Activated T-helper 1 cell treated with anti-CD3 and anti-CD28 coated beads, Interleukin-12 subunit alpha, Interleukin-12 subunit beta, Interleukin-2, Interleukin-4 antibody, amounts not matched to agents 30 ng/mL and 10 ng/mL and 1 ng/mL, durations not matched to agents 14 hours and 24 hours and 36 hours (primary cell): ENCODE measurements at regions of chr22 and their contacts with region 1.

Region 1: DNA sequence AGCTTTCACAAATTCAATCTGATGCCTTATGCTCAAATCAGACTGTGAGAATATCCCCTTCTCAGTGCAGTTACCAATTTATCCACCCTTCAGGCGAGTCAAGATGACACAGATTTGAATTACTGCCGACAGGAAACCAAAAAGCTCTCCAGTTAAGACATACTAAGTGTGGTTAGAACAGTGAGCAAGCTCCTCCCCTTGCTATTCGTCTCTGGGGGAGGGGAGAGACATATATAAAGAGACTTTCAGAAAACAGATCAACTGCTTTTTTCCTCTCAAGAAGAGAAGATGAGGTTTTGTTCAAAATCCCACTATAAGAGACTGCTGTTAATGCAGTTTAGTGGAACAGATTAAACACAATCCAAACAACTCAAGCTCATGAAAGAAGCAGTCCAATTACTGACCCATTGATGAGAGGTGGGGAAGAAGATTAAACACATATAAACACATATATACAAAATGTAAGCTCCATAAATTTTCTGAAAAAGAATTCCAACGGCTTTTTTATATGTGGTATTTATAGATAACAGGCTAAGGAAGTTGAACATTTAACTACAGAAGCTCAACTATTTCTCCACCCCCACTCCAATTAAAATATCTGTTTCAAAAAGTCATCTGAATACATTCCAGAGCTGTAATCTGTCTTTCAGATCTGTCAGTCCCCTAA is 102.7 kb downstream of the MRTFA start:
- DNase-seq: peak; percentile 53
- H3K4me3 Mint-ChIP-seq: peak overlapping the region; percentile 84
- H3K27ac Mint-ChIP-seq: peak overlapping the region; percentile 82
- H3K4me1 Mint-ChIP-seq: peaks cover 62% of the 10 kb centered on the region
- H3K27me3 Mint-ChIP-seq: no peaks in the 10 kb centered on the region

Region 2: DNA sequence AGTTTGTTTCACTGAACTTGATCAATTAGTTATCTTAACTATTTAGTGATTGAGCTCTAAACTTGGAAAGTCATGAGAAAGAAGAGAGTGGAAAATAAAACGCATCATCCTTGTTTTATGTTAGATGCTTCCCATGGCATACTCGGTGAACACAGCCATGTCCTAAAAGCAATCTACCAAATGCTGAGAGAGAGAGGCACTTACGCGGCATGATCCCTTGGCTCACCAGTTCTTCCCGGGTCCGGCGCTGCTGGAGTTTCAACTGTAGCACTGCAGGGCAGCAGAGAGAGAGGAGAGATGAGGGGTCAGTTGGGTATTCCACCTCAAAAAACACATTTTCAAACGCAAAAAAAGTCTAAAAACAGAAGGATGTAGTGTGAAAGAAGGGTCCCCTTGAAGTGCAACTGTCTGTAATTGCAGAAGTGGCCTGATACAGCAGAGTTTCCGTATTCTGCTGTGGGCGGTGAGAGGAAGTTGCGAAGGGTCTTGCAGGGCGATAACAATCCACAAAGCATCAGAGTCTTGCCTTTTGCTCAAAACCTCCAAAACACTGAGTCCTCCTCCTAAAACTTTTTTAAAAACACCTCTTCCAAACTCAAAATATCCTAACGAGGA is 70.7 kb before region 1 on chr22:
- intact Hi-C with region 1: loop called (anchors 2 kb)
- DNase-seq: peak; percentile 37
- H3K4me3 Mint-ChIP-seq: peak overlapping the region; percentile 93
- H3K27ac Mint-ChIP-seq: peak overlapping the region; percentile 99
- H3K4me1 Mint-ChIP-seq: peaks cover 55% of the 10 kb centered on the region
- H3K27me3 Mint-ChIP-seq: no peaks in the 10 kb centered on the region

Region 3: GRCh38 chr22:40519284-40519947 is 14.4 kb before region 1 on chr22:
- intact Hi-C with region 1: loop called (anchors 2 kb)
- DNase-seq: no peak
- H3K4me3 Mint-ChIP-seq: peak overlapping the region; percentile 50
- H3K27ac Mint-ChIP-seq: peak overlapping the region; percentile 83
- H3K4me1 Mint-ChIP-seq: peaks cover 26% of the 10 kb centered on the region
- H3K27me3 Mint-ChIP-seq: no peaks in the 10 kb centered on the region

Region 4: GRCh38 chr22:40583053-40583741 is 49.4 kb after region 1 on chr22:
- intact Hi-C with region 1: loop called (anchors 2 kb)
- DNase-seq: no peak
- H3K4me3 Mint-ChIP-seq: peak overlapping the region; percentile 31
- H3K27ac Mint-ChIP-seq: peak overlapping the region; percentile 78
- H3K4me1 Mint-ChIP-seq: peaks cover 38% of the 10 kb centered on the region
- H3K27me3 Mint-ChIP-seq: no peaks in the 10 kb centered on the region

Region 5: DNA sequence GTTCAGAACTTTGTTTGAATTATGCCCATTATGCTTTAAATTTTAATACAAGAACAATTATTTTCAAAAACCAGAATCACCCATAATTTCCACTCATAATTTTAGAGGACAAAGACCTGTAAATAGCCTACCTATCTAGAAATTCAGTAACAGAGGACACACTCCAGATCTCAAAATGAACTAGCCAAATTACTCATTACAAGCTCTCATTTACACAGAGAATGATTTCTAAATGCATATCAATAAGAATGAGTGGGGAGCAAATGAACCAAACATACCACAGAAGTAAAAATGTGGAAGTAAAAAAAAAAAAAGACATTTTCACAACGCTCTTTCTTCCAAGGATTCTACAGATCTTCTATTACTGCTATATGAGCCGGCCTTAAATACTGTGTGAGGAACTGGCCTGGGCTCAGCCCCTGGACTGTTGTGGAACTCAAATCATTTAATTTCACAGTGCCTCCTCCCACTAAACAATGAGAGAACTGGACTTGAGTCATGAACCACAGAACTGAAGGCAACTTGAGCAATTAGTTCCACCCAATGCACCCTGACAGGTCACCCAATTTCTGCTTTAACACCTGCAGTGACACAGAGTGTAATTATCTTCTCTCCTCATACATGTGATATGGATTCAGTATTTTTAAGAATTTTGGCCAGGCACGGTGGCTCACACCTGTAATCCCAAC is 94.7 kb after region 1 on chr22:
- intact Hi-C with region 1: loop called (anchors 2 kb)
- DNase-seq: no peak
- H3K4me3 Mint-ChIP-seq: no peak overlapping the region
- H3K27ac Mint-ChIP-seq: peak overlapping the region; percentile 62
- H3K4me1 Mint-ChIP-seq: peaks cover 34% of the 10 kb centered on the region
- H3K27me3 Mint-ChIP-seq: no peaks in the 10 kb centered on the region

Region 6: DNA sequence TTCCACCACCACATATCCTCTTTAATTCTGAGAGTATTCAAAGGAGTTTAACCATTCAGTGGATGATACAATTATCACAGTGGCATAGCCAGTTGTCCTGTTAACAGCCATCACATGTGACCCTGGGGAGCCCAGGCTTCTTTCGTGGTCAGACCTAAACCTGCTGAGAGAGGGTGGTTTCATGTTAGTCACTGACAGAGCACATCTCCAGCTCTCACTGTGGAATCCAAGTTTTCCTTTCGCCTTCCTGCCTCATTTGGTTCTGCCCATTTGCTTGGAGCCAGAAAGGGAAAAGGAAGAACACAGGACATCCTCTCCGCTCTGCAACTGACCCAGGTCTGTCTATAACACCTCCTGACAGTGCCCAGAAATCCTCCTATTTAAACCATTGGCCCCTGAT is 205.9 kb after region 1 on chr22:
- intact Hi-C with region 1: no loop called
- DNase-seq: no peak
- H3K4me3 Mint-ChIP-seq: no peak overlapping the region
- H3K27ac Mint-ChIP-seq: no peak overlapping the region
- H3K4me1 Mint-ChIP-seq: no peaks in the 10 kb centered on the region
- H3K27me3 Mint-ChIP-seq: peaks cover 4% of the 10 kb centered on the region

Region 7: GRCh38 chr22:40818747-40819598 is 285.1 kb after region 1 on chr22 and contains the start of gene SLC25A17:
- intact Hi-C with region 1: loop called (anchors 5 kb)
- DNase-seq: peak; percentile 82
- H3K4me3 Mint-ChIP-seq: peak within 1 kb of the TSS; percentile 87
- H3K27ac Mint-ChIP-seq: peak within 1 kb of the TSS; percentile 93
- H3K4me1 Mint-ChIP-seq: peaks cover 33% of the 10 kb centered on the region
- H3K27me3 Mint-ChIP-seq: no peaks in the 10 kb centered on the region
- total RNA-seq, gene SLC25A17: 29.4 and 34.0 TPM in 2 replicates

Region 8: GRCh38 chr22:40898850-40899357 is 365.1 kb after region 1 on chr22:
- intact Hi-C with region 1: loop called (anchors 5 kb)
- DNase-seq: peak; percentile 8
- H3K4me3 Mint-ChIP-seq: no peak overlapping the region
- H3K27ac Mint-ChIP-seq: no peak overlapping the region
- H3K4me1 Mint-ChIP-seq: peaks cover 10% of the 10 kb centered on the region
- H3K27me3 Mint-ChIP-seq: no peaks in the 10 kb centered on the region